ENCODE measurements at regions of chr3 and their contacts with region 1.

Region 1: DNA sequence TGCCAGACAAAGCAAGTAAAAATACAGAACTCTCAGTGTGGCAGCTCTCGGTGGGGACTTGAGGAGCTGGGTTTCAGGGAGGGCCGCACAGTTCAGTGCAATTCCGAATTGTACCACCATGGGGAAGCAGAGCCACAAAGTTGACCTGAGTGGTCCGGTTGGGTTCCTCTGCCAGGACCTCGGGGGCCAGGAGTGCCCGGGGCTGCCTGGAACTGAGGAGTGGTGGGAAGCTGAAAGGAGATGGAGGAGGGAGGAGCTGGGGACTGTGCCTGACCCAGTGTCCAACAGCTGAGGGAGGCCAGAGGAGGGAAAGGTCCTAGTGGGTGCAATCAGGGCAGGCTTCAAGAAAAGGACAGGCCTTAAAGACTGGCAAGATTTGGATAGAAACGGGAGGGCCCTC is 32.2 kb upstream of the TRH start:
- DNase-seq: peak; percentile 49
- ATAC-seq: peak; percentile 81 to 92 (median 86)
- H3K4me3 ChIP-seq: no peak overlapping the region
- H3K27ac ChIP-seq: no peak overlapping the region
- H3K4me1 ChIP-seq: peaks cover 0 to 2% (median 0%) of the 10 kb centered on the region in 9 donors
- H3K27me3 ChIP-seq: peaks cover 0 to 9% (median 0%) of the 10 kb centered on the region in 7 donors
- CTCF ChIP-seq: peak; percentile 51 to 80 (median 75)

Region 2: DNA sequence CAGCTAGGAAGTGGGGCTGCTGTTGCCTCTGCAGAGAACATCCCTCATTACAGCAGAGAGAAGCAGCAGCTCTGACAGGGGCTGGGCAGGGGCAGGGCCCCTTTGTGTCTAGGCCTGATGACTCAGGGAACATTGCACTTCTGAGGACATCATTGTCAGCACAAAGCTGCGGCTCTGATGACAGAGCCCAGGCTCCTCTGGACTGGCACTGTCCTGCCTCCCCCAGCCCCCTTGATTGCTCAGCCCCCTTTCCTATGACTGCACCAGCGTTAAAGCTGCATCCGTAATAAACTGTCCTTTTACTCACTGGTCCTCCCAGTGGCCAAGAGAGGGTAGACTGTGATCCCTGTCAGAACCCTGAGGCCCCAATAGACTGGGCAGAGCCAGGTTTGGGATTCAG is 50.5 kb after region 1 on chr3:
- intact Hi-C with region 1: loop called in 3 of 10 experiments (anchors 5 to 10 kb)
- DNase-seq: no peak
- ATAC-seq: peak in 4 of 8 donors; percentile 30 to 51 (median 38)
- H3K4me3 ChIP-seq: no peak overlapping the region
- H3K27ac ChIP-seq: no peak overlapping the region
- H3K4me1 ChIP-seq: no peaks in the 10 kb centered on the region
- H3K27me3 ChIP-seq: peaks cover 0 to 37% (median under 1%) of the 10 kb centered on the region in 7 donors
- CTCF ChIP-seq: peak in 3 of 9 donors; percentile 28 to 32 (median 29)

Region 3: DNA sequence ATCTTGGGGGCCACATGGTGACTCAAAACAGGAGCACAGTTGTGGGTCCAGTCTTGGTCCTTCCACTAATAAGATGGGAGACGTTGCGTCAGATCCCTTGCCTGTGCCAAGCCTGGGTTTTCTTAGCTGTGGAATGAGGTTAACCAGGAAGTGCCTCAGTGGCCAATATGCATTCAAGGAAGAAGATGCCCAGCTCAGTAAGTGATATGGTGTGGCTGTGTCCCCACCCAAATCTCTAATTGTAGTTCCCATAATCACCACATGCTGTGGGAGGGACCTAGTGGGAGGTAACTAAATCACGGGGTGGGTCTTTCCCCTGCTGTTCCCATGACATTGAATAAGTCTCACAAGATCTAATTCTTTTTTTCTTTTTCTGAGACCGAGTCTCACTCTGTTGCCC is 145.8 kb after region 1 on chr3:
- intact Hi-C with region 1: loop called in 1 of 10 experiments (anchors 5 kb)
- DNase-seq: no peak
- ATAC-seq: no peak
- H3K4me3 ChIP-seq: no peak overlapping the region
- H3K27ac ChIP-seq: no peak overlapping the region
- H3K4me1 ChIP-seq: peaks cover 0 to under 1% (median 0%) of the 10 kb centered on the region in 9 donors
- H3K27me3 ChIP-seq: no peaks in the 10 kb centered on the region
- CTCF ChIP-seq: no peak

Region 4: GRCh38 chr3:130093741-130094391 is 151.6 kb after region 1 on chr3:
- intact Hi-C with region 1: loop called in 5 of 10 experiments (anchors 5 kb)
- DNase-seq: no peak
- ATAC-seq: no peak
- H3K4me3 ChIP-seq: peak overlapping the region in 1 of 10 donors; percentile 24
- H3K27ac ChIP-seq: peak overlapping the region in 1 of 10 donors; percentile 31
- H3K4me1 ChIP-seq: peaks cover 0 to 20% (median 0%) of the 10 kb centered on the region in 9 donors
- H3K27me3 ChIP-seq: no peaks in the 10 kb centered on the region
- CTCF ChIP-seq: no peak

Region 5: GRCh38 chr3:130111185-130111864 is 169.0 kb after region 1 on chr3:
- intact Hi-C with region 1: loop called in 2 of 10 experiments (anchors 5 kb)
- DNase-seq: peak; percentile 99 to 100
- ATAC-seq: peak; percentile 100
- H3K4me3 ChIP-seq: peak overlapping the region; percentile 61 to 95 (median 82)
- H3K27ac ChIP-seq: peak overlapping the region in 9 of 10 donors; percentile 48 to 90 (median 82)
- H3K4me1 ChIP-seq: peaks cover 0 to 19% (median 9%) of the 10 kb centered on the region in 9 donors
- H3K27me3 ChIP-seq: no peaks in the 10 kb centered on the region
- CTCF ChIP-seq: no peak